ENCODE measurements at regions of chr15 and their contacts with region 1.

Region 1: DNA sequence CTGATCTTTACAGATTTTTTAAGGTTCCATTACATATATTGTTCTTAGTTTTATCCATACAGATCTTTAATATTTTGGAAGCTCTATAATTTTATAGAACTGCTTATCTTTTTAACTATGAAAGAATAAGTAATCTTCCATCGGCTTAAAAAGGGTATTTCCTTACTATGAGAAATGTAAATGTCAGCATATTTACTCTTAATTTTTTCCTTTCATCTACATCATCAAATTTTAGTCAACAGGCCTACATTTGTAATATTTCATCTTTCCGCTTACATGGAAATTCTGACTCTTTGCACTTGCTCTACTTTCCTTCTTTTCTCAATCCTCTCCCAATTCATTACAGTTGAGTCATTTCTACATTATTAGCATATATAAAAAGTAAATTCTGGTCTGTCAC is 111.3 kb upstream of the GOLGA6L6 start:
- DNase-seq: no peak
- H3K4me3 ChIP-seq: no peak overlapping the region
- H3K27ac ChIP-seq: no peak overlapping the region
- H3K4me1 ChIP-seq: no peaks in the 10 kb centered on the region
- H3K27me3 ChIP-seq: 0 out of 2 replicates have a peak, but pooled peaks cover 4% of the 10 kb centered on the region
- CTCF ChIP-seq: no peak

Region 2: GRCh38 chr15:19956124-19956796 is 696.7 kb before region 1 on chr15:
- CTCF ChIA-PET with region 1: no interaction called
- POLR2A ChIA-PET with region 1: no interaction called
- intact Hi-C with region 1: no loop called
- DNase-seq: no peak
- H3K4me3 ChIP-seq: no peak overlapping the region
- H3K27ac ChIP-seq: no peak overlapping the region
- H3K4me1 ChIP-seq: no peaks in the 10 kb centered on the region
- H3K27me3 ChIP-seq: no peaks in the 10 kb centered on the region
- CTCF ChIP-seq: no peak

Region 3: GRCh38 chr15:20665641-20666040 is 12.7 kb after region 1 on chr15:
- CTCF ChIA-PET with region 1: interaction called, 3 read pairs
- POLR2A ChIA-PET with region 1: no interaction called
- intact Hi-C with region 1: loop called (anchors 2 kb)
- DNase-seq: peak in 1 of 2 experiments; percentile 30
- H3K4me3 ChIP-seq: no peak overlapping the region
- H3K27ac ChIP-seq: no peak overlapping the region
- H3K4me1 ChIP-seq: no peaks in the 10 kb centered on the region
- H3K27me3 ChIP-seq: no peaks in the 10 kb centered on the region
- CTCF ChIP-seq: no peak

Measured in PC-9 (cell line).